ENCODE measurements at regions of chr4 and their contacts with region 1.

Region 1: GRCh38 chr4:1693129-1693896 is 9.2 kb upstream of the FAM53A start:
- DNase-seq: peak; percentile 85
- H3K4me3 Mint-ChIP-seq: no peak overlapping the region
- H3K27ac Mint-ChIP-seq: peak overlapping the region; percentile 76
- H3K4me1 Mint-ChIP-seq: peaks cover 6% of the 10 kb centered on the region
- H3K27me3 Mint-ChIP-seq: no peaks in the 10 kb centered on the region

Region 2: GRCh38 chr4:1583051-1583785 is 110.1 kb before region 1 on chr4:
- CTCF ChIA-PET with region 1: no interaction called
- DNase-seq: no peak
- H3K4me3 Mint-ChIP-seq: no peak overlapping the region
- H3K27ac Mint-ChIP-seq: peak overlapping the region; percentile 5
- H3K4me1 Mint-ChIP-seq: peaks cover 13% of the 10 kb centered on the region
- H3K27me3 Mint-ChIP-seq: peaks cover 8% of the 10 kb centered on the region

Region 3: GRCh38 chr4:1706358-1706757 is 13.0 kb after region 1 on chr4:
- CTCF ChIA-PET with region 1: interaction called, 95 read pairs
- DNase-seq: no peak
- H3K4me3 Mint-ChIP-seq: no peak overlapping the region
- H3K27ac Mint-ChIP-seq: no peak overlapping the region
- H3K4me1 Mint-ChIP-seq: peaks cover 66% of the 10 kb centered on the region
- H3K27me3 Mint-ChIP-seq: peaks cover under 1% of the 10 kb centered on the region

Region 4: DNA sequence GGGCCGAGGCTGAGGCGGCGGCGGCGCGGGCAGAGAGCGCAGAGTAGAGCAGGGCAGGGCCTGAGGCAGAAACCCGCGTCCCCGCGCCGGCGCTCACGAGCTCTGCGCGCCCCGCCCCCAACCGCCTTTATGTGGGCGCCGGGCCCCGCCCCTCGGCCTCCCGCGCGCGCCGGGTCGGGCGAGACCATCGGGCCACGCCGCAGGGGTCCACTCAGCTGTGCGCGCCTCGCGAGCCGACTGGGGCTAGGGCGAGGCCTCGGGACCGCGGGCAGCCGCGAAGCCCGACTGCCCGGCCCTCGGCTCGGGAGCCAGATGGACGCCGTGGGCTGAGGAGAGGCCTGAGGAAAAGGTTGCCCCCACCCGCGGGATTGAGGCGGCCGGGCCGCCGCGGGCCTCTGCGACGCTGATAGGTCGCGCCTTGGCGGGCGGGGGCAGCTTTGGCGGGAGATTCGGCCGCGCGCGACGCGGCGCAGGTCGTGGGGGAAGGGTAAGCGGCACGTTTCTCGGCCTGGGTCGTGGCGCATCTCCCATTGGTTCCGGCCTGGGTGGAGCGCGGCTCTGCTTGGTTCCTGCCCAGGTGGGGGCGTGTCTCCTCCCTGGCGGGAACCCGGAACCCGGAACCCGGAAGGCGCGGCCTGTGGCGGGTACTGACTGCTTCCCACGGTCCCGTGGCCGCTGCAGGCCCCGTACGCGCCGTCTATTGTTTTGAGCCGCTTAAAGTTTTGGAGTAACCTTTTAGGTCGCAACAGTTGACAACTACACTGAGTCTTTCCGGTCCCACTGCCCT is 19.1 kb after region 1 on chr4 and contains the start of gene SLBP:
- CTCF ChIA-PET with region 1: interaction called, 95 read pairs
- DNase-seq: peak; percentile 99
- H3K4me3 Mint-ChIP-seq: peak within 1 kb of the TSS; percentile 100
- H3K27ac Mint-ChIP-seq: peak within 1 kb of the TSS; percentile 97
- H3K4me1 Mint-ChIP-seq: peaks cover 67% of the 10 kb centered on the region
- H3K27me3 Mint-ChIP-seq: peaks cover 3% of the 10 kb centered on the region

Region 5: GRCh38 chr4:1721004-1721665 is 27.8 kb after region 1 on chr4 and contains the starts of genes TACC3 and TMEM129:
- CTCF ChIA-PET with region 1: interaction called, 96 read pairs
- DNase-seq: peak; percentile 97
- H3K4me3 Mint-ChIP-seq: peak within 1 kb of the TSS; percentile 91
- H3K27ac Mint-ChIP-seq: peak within 1 kb of the TSS; percentile 100
- H3K4me1 Mint-ChIP-seq: peaks cover 58% of the 10 kb centered on the region
- H3K27me3 Mint-ChIP-seq: no peaks in the 10 kb centered on the region

Region 6: GRCh38 chr4:1726146-1726934 is 33.0 kb after region 1 on chr4:
- CTCF ChIA-PET with region 1: interaction called, 96 read pairs
- DNase-seq: peak; percentile 94
- H3K4me3 Mint-ChIP-seq: peak overlapping the region; percentile 8
- H3K27ac Mint-ChIP-seq: peak overlapping the region; percentile 76
- H3K4me1 Mint-ChIP-seq: peaks cover 65% of the 10 kb centered on the region
- H3K27me3 Mint-ChIP-seq: no peaks in the 10 kb centered on the region

Region 7: DNA sequence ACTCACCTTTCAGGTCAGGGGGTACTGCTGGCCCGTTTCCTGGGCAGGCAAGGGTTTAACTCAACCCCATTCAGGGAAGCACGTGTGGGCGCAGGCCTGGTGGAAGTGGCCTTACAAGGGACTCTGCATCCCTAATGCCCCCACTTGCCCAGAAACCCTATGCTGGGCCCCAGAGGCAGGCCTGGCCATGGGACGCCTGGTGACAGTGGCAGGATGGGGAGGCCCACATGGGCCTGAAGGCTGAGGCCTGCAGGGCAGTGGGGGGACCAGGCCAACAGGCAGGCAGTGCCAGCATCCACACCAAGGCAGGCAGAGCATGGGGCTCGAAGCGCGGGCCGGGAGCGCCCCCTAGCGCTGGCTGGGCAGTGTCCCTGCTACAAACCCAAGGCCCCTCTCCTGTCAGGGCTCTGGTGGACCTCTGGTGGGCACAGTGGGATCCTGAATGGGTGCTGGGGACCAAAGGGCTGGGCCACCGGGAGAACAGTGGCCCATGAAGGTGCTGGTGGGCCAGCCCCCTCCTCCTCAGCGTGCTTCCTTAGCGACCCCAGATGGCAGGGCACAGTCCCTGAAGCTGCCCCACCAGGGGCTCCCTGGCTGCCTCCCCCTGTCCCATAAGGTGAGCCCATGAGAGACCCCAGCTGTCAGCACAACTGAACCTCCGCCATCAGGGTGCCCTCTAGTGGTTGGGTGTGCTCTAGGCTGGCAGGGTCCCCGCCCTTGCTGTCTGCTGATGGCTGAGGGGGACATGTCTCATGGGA is 116.6 kb after region 1 on chr4:
- CTCF ChIA-PET with region 1: interaction called, 11 read pairs
- DNase-seq: peak; percentile 82
- H3K4me3 Mint-ChIP-seq: no peak overlapping the region
- H3K27ac Mint-ChIP-seq: no peak overlapping the region
- H3K4me1 Mint-ChIP-seq: no peaks in the 10 kb centered on the region
- H3K27me3 Mint-ChIP-seq: no peaks in the 10 kb centered on the region

Region 8: GRCh38 chr4:1821679-1822506 is 128.6 kb after region 1 on chr4:
- CTCF ChIA-PET with region 1: no interaction called
- DNase-seq: no peak
- H3K4me3 Mint-ChIP-seq: no peak overlapping the region
- H3K27ac Mint-ChIP-seq: no peak overlapping the region
- H3K4me1 Mint-ChIP-seq: no peaks in the 10 kb centered on the region
- H3K27me3 Mint-ChIP-seq: no peaks in the 10 kb centered on the region